ENCODE measurements at regions of chr1 and their contacts with region 1.

Region 1: GRCh38 chr1:213050745-213051126 is 305 bp upstream of the RPS6KC1 start:
- DNase-seq: no peak
- H3K4me3 ChIP-seq: peak overlapping the region; percentile 96
- H3K27ac ChIP-seq: peak overlapping the region; percentile 74
- H3K27me3 ChIP-seq: no peaks in the 10 kb centered on the region
- CTCF ChIP-seq: no peak

Region 2: DNA sequence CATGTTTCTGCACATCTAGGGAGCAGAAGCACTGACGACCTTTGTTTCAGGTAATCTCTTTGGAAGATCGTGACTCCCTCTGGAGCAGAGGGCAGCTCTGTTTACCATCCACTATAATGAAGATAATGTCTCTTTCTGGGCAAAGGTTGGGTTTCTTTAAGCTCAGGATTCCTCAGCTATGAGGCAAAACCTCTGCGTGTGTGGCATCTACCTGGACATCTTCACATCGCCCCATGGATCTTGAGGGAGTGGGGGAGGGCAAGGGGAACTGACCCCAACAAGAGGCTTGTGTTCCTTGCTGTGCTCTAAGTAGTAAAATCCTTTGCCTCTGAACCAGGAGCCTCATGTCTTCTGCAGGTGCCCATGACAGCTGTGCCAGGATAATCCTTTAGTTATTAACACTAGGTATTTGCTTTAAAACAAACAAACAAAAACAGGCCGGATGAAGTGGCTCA is 222.9 kb before region 1 on chr1:
- CTCF ChIA-PET with region 1: no interaction called
- POLR2A ChIA-PET with region 1: interaction called, 13 read pairs
- DNase-seq: no peak
- H3K4me3 ChIP-seq: no peak overlapping the region
- H3K27ac ChIP-seq: no peak overlapping the region
- H3K27me3 ChIP-seq: no peaks in the 10 kb centered on the region
- CTCF ChIP-seq: no peak

Region 3: GRCh38 chr1:212909652-212910063 is 141.1 kb before region 1 on chr1:
- CTCF ChIA-PET with region 1: no interaction called
- POLR2A ChIA-PET with region 1: no interaction called
- DNase-seq: no peak
- H3K4me3 ChIP-seq: no peak overlapping the region
- H3K27ac ChIP-seq: no peak overlapping the region
- H3K27me3 ChIP-seq: no peaks in the 10 kb centered on the region
- CTCF ChIP-seq: no peak